HepG2 (cell line): ENCODE measurements at regions of chr6 and their contacts with region 1.

Region 1: DNA sequence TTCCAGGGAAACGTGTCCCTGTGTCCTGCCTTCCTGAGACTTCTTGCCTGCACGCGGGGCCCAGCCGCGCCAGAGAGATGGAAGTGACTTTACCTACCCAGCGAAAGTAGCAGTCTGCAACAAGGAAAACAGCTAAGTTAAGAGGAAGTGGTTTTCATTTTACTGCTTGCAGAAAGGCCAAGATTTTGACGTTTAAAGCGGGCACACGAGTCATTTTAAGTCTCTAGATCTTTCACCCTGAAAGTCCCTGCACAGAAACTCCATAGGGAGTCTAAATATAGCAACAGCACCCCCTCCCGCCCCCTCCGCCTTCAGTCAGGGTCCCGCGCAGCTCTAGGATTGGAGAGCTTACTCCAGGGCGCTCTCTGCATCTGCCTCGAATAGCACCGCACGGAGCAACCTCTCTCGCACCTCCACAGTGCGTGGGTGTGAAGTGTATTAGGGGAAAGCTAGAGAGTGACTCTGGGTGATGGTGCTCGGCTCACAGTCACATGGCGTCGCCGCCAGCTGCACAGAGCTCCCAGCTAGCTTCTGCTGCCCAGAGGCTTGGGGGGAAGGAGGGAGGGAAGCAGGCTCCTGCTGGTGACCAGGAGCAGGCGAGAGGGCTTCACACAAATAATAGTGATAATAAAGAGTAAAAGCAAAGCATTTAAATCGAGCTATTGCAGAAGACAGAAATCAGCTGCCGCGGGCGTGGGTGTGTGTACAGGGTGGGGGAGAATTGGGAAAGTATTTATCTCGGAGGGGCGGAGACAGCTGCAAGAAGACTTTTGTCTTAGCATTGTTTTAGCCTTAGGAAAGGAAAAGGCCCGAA is 1.8 kb upstream of the KCNQ5 start:
- DNase-seq: no peak
- ATAC-seq: no peak
- H3K4me3 ChIP-seq: no peak overlapping the region
- H3K27ac ChIP-seq: no peak overlapping the region
- H3K4me1 ChIP-seq: no peaks in the 10 kb centered on the region
- H3K27me3 ChIP-seq: peaks cover 4 to 25% of the 10 kb centered on the region in 2 experiments; a peak in 3 of 5 replicates
- CTCF ChIP-seq: no peak
- EP300 ChIP-seq: no peak
- POLR2A ChIP-seq: no peak
- RAD21 ChIP-seq: no peak

Region 2: GRCh38 chr6:72689107-72689954 is 69.2 kb after region 1 on chr6:
- CTCF ChIA-PET with region 1: no interaction called
- POLR2A ChIA-PET with region 1: no interaction called
- in situ Hi-C with region 1: no loop called
- intact Hi-C with region 1: no loop called
- DNase-seq: no peak
- ATAC-seq: no peak
- H3K4me3 ChIP-seq: no peak overlapping the region
- H3K27ac ChIP-seq: no peak overlapping the region
- H3K4me1 ChIP-seq: no peaks in the 10 kb centered on the region
- H3K27me3 ChIP-seq: no peaks in the 10 kb centered on the region; a peak in 1 of 5 replicates
- CTCF ChIP-seq: no peak
- EP300 ChIP-seq: no peak
- POLR2A ChIP-seq: no peak
- RAD21 ChIP-seq: no peak

Region 3: DNA sequence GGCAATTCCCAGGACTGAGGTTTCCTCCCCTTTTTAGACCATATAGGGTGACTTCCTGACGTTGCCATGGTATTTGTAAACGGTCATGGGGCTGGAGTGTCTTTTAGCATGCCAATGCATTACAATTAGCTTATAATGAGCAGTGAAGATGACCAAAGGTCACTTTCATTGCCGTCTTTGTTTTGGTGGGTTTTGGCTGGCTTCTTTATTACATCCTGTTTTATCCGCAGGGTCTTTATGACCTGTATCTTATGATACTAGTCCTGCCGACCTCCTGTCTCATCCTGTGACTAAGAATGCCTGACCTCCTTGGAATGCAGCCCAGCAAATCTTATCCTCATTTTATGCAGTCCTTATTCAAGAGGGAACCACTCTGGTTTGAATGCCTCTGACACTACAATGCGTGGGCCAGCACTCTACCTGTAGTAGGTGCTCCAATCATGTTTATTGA is 191.9 kb after region 1 on chr6:
- CTCF ChIA-PET with region 1: no interaction called
- POLR2A ChIA-PET with region 1: no interaction called
- in situ Hi-C with region 1: no loop called
- intact Hi-C with region 1: no loop called
- DNase-seq: no peak
- ATAC-seq: no peak
- H3K4me3 ChIP-seq: no peak overlapping the region
- H3K27ac ChIP-seq: no peak overlapping the region
- H3K4me1 ChIP-seq: no peaks in the 10 kb centered on the region
- H3K27me3 ChIP-seq: no peaks in the 10 kb centered on the region
- CTCF ChIP-seq: no peak
- EP300 ChIP-seq: no peak
- POLR2A ChIP-seq: no peak
- RAD21 ChIP-seq: no peak

Region 4: DNA sequence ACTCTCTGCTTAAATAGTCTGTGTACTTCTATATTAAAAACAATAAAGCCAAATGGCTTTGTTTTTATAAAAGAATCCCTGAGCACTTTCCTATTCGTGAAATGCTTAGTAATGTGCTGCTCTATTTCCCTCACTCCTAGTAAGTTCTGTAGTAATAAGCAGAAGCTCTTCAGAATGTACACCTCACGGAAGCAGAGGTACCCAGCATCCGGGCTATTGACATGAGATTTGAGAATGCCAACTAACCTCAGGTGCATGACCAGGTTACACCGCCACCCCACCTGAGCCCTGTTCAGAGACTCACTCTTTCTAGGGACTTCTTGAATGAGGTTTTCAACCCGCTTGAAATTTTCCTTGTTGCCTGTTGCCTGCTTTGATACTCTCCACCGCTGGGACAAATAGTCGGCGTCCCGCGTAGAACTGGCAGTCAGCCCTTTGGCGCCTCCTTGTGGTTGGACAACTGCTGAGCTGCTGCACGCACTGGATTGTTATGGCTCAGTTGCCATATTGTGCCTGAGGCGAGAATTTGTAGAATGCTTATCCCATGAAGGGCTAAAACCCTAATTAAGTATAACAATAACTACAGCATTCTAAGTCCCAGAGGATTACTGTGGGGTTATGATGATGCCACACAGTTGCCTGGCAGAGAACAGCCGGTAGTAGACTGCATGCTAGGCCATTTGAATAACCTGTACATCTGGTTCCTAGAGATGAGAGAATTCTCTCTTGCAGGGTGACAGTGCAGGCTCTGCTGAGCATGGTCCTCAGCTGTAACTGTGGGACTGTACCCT is 509.8 kb after region 1 on chr6:
- CTCF ChIA-PET with region 1: interaction called, 6 read pairs
- POLR2A ChIA-PET with region 1: no interaction called
- in situ Hi-C with region 1: loop called (anchors 10 kb)
- intact Hi-C with region 1: loop called (anchors 1 kb)
- DNase-seq: peak; percentile 53
- ATAC-seq: peak; percentile 100
- H3K4me3 ChIP-seq: no peak overlapping the region
- H3K27ac ChIP-seq: no peak overlapping the region
- H3K4me1 ChIP-seq: no peaks in the 10 kb centered on the region
- H3K27me3 ChIP-seq: no peaks in the 10 kb centered on the region
- CTCF ChIP-seq: peak; percentile 92
- EP300 ChIP-seq: no peak
- POLR2A ChIP-seq: no peak
- RAD21 ChIP-seq: peak; percentile 72

Region 5: DNA sequence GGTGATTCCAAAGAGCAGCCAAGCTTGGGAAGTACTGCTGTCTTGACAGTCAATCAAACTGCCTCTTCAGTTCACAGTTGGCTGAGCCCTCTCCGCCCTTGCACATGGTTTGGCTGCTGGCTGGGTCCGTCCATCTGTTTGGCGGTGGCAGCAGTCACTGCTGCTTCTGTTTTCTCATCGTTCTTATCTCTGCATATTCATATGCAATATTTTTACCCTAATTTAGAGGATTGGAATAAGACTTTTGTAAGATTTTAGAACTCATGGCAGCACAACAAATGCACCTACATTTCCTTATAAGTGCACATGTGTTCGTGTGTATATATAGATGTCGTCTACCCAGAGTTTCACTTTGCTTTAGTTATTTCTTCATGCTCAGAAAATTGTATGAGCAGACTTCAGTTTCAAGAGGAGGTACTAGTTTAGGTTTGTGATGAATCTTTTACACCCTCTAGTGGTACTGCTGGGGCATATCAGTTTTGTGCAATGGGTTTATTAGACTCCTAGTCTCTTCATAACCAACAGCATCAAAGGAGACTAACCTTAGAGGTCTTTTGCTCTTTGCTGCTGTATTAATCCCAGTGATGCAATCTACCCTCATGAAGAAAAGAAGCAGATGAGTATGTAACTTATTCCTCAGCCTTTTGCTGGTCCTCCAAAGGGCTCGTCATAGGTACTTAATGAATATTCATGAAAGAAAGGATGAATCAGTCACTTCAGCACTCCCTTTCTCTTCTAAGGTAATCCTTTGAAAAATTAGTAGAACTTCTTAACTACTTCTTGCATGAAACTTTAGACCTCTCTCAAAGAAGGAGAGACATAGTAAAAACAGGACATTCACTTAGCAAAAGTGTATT is 560.9 kb after region 1 on chr6:
- CTCF ChIA-PET with region 1: no interaction called
- POLR2A ChIA-PET with region 1: no interaction called
- in situ Hi-C with region 1: no loop called
- intact Hi-C with region 1: loop called (anchors 1 kb)
- DNase-seq: peak; percentile 39
- ATAC-seq: peak; percentile 88
- H3K4me3 ChIP-seq: no peak overlapping the region
- H3K27ac ChIP-seq: no peak overlapping the region
- H3K4me1 ChIP-seq: no peaks in the 10 kb centered on the region
- H3K27me3 ChIP-seq: no peaks in the 10 kb centered on the region
- CTCF ChIP-seq: peak; percentile 62
- EP300 ChIP-seq: no peak
- POLR2A ChIP-seq: no peak
- RAD21 ChIP-seq: no peak